Common myeloid progenitor, CD34-positive (primary cell): ENCODE measurements at regions of chr1 and their contacts with region 1.

Region 1: DNA sequence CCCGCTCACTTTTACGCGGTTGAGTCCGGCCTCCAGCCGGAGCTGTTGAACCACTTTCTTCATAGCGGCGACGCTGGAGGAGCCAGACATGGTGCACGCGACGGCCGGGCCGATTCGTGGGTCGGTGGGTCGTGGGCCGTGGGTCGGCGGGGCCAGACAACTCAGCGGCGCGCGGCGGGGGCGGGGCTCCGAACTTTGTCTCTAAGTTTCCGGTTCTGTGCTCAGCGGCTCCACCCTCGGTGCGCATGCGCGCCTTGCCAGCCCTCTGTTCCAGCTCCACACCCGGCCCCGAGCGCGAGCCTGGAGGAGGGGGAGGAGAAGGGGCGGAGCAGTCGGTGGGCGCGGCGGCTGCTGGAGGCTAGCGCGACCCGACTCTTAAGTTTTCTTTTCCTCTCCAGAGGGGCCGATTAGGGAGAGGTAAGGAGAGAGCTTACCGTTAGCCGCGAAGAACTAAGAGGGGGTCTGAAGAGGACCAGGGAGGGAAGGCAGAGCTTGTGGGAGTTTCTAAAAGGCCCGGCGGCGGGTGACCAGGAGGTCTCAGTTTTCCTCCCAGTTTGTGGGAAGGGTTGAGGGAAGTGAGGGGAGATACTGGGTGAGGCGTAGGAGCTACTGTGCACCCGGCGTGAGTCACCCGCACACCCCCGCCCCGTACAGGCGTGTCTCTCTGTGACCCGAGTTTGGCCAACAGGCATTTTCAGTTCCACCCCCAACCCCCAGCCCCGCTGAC is at the starts of genes GNG5 and SPATA1:
- DNase-seq: peak; percentile 97 to 99 (median 99)
- H3K4me3 ChIP-seq: peak within 1 kb of the TSS; percentile 84 to 98 (median 94)
- H3K27ac ChIP-seq: peak within 1 kb of the TSS; percentile 86 to 93
- H3K4me1 ChIP-seq: peaks cover 8 to 33% (median 23%) of the 10 kb centered on the region in 4 experiments
- H3K27me3 ChIP-seq: no peaks in the 10 kb centered on the region

Region 2: DNA sequence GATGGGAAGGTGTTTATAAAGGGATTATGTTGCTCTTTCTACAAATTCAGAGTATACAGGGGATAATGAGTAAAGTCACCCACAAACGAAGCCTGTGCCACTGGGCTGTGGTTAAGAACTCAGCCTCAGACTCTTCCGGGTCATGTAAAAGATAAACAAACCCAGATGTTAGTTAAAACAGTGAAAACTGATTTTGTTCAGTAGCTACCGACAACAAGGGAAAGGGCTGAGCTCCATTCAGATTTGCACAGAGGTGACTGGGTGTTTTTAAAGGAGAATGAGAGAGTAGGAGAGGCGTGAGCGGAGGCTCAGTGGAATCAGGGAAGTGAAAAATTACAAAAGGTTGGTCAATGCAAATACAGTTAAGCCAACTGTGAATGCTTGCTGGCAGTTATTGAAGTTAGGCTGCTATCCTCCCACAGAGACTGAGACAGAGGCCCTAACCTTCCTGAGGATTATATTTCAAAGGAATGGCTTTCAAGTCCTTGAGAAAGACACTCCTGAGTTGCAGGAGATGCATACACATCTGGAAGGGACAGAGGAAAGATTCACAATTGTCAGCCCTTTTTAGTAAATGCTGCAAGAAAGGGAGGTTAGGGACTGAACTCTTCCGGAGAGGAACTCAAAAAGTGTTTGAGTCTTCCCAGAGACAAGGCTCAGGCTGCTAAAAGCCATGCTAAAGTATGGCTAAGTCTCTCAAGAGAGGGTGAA is 234.6 kb before region 1 on chr1:
- CTCF ChIA-PET with region 1: no interaction called
- POLR2A ChIA-PET with region 1: no interaction called
- DNase-seq: peak in 2 of 3 donors; percentile 23 to 45
- H3K4me3 ChIP-seq: no peak overlapping the region
- H3K27ac ChIP-seq: no peak overlapping the region
- H3K4me1 ChIP-seq: peaks cover 0 to 11% (median 4%) of the 10 kb centered on the region in 4 experiments
- H3K27me3 ChIP-seq: no peaks in the 10 kb centered on the region

Region 3: GRCh38 chr1:84365225-84366221 is 140.6 kb before region 1 on chr1:
- CTCF ChIA-PET with region 1: no interaction called
- POLR2A ChIA-PET with region 1: no interaction called
- DNase-seq: peak in 2 of 3 donors; percentile 37 to 60
- H3K4me3 ChIP-seq: no peak overlapping the region
- H3K27ac ChIP-seq: no peak overlapping the region
- H3K4me1 ChIP-seq: peaks cover 0 to 5% (median 3%) of the 10 kb centered on the region in 4 experiments
- H3K27me3 ChIP-seq: no peaks in the 10 kb centered on the region

Region 4: GRCh38 chr1:84478876-84479868 is 27.0 kb before region 1 on chr1 and contains the start of gene RPF1:
- CTCF ChIA-PET with region 1: interaction called, 21 read pairs
- POLR2A ChIA-PET with region 1: interaction called, 4 read pairs
- DNase-seq: peak; percentile 81 to 90 (median 86)
- H3K4me3 ChIP-seq: peak within 1 kb of the TSS; percentile 92 to 98 (median 95)
- H3K27ac ChIP-seq: peak within 1 kb of the TSS; percentile 58 to 87
- H3K4me1 ChIP-seq: peaks cover 2 to 22% (median 15%) of the 10 kb centered on the region in 4 experiments
- H3K27me3 ChIP-seq: peaks cover 0 to 12% (median 0%) of the 10 kb centered on the region in 5 experiments

Region 5: DNA sequence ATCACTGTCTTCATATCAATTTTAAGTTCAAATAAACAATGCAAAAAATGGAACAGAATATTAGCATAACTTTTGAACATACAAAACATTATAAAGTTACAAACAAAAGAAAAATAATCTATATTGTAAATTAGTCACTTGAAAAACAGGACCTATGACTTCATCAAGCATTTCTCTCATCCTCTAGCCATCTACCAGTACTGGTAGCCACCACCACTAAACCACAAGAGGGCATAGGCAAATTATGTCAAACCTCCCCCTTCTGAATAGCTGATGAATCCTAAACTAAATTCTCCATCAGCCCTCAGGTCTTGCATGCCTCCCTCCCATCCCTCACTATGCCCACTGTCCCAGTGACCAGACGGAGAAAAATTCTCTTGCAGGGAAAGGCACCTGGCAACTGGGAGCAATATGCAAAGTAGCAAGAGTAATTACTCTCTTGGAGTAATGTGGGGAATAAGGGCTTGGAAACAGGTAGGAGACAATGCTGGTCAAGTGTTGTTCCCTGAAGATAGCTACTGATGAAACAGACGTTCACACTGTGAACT is 147.0 kb after region 1 on chr1:
- CTCF ChIA-PET with region 1: no interaction called
- POLR2A ChIA-PET with region 1: no interaction called
- DNase-seq: peak in 2 of 3 donors; percentile 7 to 21
- H3K4me3 ChIP-seq: no peak overlapping the region
- H3K27ac ChIP-seq: no peak overlapping the region
- H3K4me1 ChIP-seq: no peaks in the 10 kb centered on the region
- H3K27me3 ChIP-seq: no peaks in the 10 kb centered on the region